ENCODE measurements at regions of chr4 and their contacts with region 1.

Region 1: DNA sequence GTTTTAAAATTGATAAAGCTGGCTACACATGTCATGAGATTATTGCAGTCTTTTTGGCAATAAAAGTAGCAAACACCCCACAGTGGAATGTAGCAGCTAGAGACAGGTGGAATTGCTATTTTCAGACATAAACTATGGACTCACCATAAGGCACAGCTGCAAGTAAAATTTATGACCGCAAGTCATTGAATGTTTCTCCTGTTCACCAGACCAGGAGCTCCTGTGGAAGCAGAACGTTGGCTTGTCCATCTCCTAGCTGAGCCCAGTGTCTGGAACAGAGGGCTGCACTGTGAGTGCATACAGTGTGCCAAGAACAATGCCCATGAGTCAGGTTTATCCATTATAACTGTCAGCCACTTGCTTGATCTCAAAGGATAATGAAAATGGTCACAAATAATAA is 538.2 kb downstream of the INPP4B start:
- DNase-seq: no peak
- ATAC-seq: no peak
- H3K4me3 ChIP-seq: no peak overlapping the region
- H3K4me3 Mint-ChIP-seq: no peak overlapping the region
- H3K27ac ChIP-seq: no peak overlapping the region
- H3K27ac Mint-ChIP-seq: no peak overlapping the region
- H3K4me1 ChIP-seq: peaks cover 4% of the 10 kb centered on the region
- H3K4me1 Mint-ChIP-seq: peaks cover 82% of the 10 kb centered on the region
- H3K27me3 ChIP-seq: no peaks in the 10 kb centered on the region
- H3K27me3 Mint-ChIP-seq: no peaks in the 10 kb centered on the region
- CTCF ChIP-seq: no peak

Region 2: GRCh38 chr4:141636082-141636770 is 671.6 kb before region 1 on chr4 and contains the start of gene IL15:
- CTCF ChIA-PET with region 1: no interaction called
- POLR2A ChIA-PET with region 1: no interaction called
- intact Hi-C with region 1: no loop called
- DNase-seq: peak; percentile 29 to 87 (median 49)
- ATAC-seq: peak; percentile 77
- H3K4me3 ChIP-seq: peak within 1 kb of the TSS; percentile 91
- H3K4me3 Mint-ChIP-seq: peak within 1 kb of the TSS; percentile 97
- H3K27ac ChIP-seq: peak within 1 kb of the TSS in 1 of 2 donors; percentile 20
- H3K27ac Mint-ChIP-seq: no peak within 1 kb of the TSS
- H3K4me1 ChIP-seq: peaks cover 12% of the 10 kb centered on the region
- H3K4me1 Mint-ChIP-seq: peaks cover 21% of the 10 kb centered on the region
- H3K27me3 ChIP-seq: no peaks in the 10 kb centered on the region
- H3K27me3 Mint-ChIP-seq: peaks cover 22% of the 10 kb centered on the region
- CTCF ChIP-seq: no peak
- total RNA-seq, gene IL15: 0.60 to 1.3 TPM

Region 3: DNA sequence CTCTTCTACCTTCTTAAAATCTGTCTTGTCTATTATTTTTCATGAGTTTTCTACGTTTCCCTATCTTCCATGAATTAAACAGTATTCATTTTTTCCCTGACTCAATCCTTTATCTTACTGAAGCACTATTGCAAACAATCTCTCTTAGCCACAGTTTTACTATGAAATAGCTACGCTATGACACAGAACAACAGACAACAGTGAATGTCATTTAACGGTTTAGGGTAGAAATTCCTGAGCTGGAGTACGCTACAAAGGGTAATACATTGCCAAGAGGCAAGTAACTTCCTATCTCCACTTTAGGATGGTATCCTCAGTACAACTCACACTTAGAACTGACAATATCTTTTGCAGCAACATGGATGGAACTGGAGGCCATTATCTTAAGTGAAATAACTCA is 14.3 kb before region 1 on chr4:
- CTCF ChIA-PET with region 1: interaction called, 6 read pairs
- POLR2A ChIA-PET with region 1: interaction called, 4 read pairs
- intact Hi-C with region 1: loop called in 1 of 2 experiments (anchors 2 kb)
- DNase-seq: no peak
- ATAC-seq: no peak
- H3K4me3 ChIP-seq: no peak overlapping the region
- H3K4me3 Mint-ChIP-seq: no peak overlapping the region
- H3K27ac ChIP-seq: no peak overlapping the region
- H3K27ac Mint-ChIP-seq: peak overlapping the region; percentile 70
- H3K4me1 ChIP-seq: peaks cover 9% of the 10 kb centered on the region
- H3K4me1 Mint-ChIP-seq: peaks cover 56% of the 10 kb centered on the region
- H3K27me3 ChIP-seq: no peaks in the 10 kb centered on the region
- H3K27me3 Mint-ChIP-seq: no peaks in the 10 kb centered on the region
- CTCF ChIP-seq: no peak

Region 4: GRCh38 chr4:142341268-142341667 is 33.4 kb after region 1 on chr4:
- CTCF ChIA-PET with region 1: no interaction called
- POLR2A ChIA-PET with region 1: no interaction called
- intact Hi-C with region 1: loop called in 1 of 2 experiments (anchors 5 kb)
- DNase-seq: no peak
- ATAC-seq: no peak
- H3K4me3 ChIP-seq: no peak overlapping the region
- H3K4me3 Mint-ChIP-seq: no peak overlapping the region
- H3K27ac ChIP-seq: no peak overlapping the region
- H3K27ac Mint-ChIP-seq: no peak overlapping the region
- H3K4me1 ChIP-seq: peaks cover 5% of the 10 kb centered on the region
- H3K4me1 Mint-ChIP-seq: peaks cover 83% of the 10 kb centered on the region
- H3K27me3 ChIP-seq: no peaks in the 10 kb centered on the region
- H3K27me3 Mint-ChIP-seq: no peaks in the 10 kb centered on the region
- CTCF ChIP-seq: no peak

Region 5: GRCh38 chr4:142383800-142384635 is 76.2 kb after region 1 on chr4:
- CTCF ChIA-PET with region 1: no interaction called
- POLR2A ChIA-PET with region 1: no interaction called
- intact Hi-C with region 1: no loop called
- DNase-seq: no peak
- ATAC-seq: no peak
- H3K4me3 ChIP-seq: no peak overlapping the region
- H3K4me3 Mint-ChIP-seq: peak overlapping the region; percentile 38
- H3K27ac ChIP-seq: no peak overlapping the region
- H3K27ac Mint-ChIP-seq: peak overlapping the region; percentile 61
- H3K4me1 ChIP-seq: peaks cover 23% of the 10 kb centered on the region
- H3K4me1 Mint-ChIP-seq: peaks cover 88% of the 10 kb centered on the region
- H3K27me3 ChIP-seq: no peaks in the 10 kb centered on the region
- H3K27me3 Mint-ChIP-seq: no peaks in the 10 kb centered on the region
- CTCF ChIP-seq: no peak